OCI-LY7 (cell line): ENCODE measurements at regions of chr6 and their contacts with region 1.

Region 1: DNA sequence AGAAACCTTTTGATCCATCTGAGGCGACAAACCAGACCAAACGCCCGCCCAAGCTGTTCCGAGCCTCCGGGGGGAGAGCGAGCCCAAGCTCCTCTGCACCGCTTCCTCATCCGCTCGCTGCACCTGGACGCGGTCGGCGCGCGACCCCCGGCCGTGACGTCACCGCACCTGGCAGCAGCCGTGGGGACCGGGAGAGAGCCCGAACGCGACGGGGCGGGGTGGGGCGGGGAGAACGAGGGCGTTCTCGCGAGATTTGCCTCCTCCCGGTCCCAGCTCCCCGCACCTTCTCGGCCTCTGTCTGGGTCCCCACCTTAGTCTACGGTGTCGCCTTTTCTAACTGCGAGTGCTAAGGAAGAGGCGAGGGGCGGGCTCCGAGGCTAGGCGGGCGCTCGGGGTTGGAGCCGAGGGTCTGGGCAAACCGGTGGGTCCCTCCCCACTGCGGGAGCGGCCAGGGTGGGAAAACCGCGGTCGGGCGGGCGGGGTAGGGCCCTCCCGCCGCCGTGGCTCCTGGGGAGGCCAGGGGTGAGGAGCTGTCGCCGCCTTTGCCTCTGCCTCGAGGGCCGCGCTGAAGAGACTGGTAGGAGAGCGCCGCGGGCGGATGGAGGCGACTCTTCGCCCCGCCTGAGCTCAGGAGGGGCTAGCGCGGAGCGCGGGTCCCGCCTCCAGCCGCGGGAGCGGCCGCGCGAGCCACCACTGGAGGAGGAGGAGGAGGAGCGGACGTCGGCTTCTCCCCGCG is at the start of gene CD2AP:
- DNase-seq: peak; percentile 98
- H3K4me3 ChIP-seq: peak within 1 kb of the TSS; percentile 81
- H3K27ac ChIP-seq: peak within 1 kb of the TSS; percentile 97
- H3K4me1 ChIP-seq: peaks cover 54% of the 10 kb centered on the region
- CTCF ChIP-seq: 0 out of 2 replicates have a peak, but pooled peaks have one; percentile 30
- total RNA-seq, gene CD2AP: 26.6 and 30.0 TPM in 2 replicates

Region 2: DNA sequence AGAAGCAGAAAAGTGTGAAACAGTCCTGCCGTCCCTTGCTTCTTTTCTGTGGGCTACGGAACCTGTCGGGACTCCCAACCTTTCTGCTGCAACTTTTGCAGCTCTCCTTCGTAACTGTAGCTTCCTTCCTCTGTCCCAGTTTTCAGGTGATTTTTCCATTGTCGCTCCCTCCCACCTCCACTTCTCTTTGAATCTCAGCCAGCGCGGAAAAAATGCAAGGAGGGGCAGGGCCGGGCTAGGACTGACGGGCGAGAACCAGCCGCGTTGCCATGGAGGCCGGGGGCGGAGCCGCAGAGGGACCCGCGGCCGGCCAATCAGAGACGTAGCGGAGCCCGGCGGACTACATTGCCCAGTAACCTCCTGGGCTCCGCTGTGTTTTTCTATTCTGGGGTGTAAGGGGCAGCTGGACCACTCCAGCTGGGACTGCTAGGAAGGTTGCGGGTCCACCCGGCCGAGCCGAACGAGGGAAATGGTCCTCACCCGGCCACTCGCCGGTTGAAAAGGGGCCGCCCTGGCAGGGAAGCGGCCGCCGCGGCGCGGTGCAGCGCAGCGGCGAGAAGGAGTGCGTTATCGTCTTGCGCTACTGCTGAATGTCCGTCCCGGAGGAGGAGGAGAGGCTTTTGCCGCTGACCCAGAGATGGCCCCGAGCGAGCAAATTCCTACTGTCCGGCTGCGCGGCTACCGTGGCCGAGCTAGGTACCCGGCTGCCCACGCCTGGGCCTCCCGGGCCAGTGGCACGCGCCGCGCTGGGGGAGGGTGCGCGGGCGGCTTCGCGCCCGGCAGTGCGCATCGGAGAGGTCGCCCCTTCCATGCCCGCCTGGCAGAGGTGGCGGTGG is 824.8 kb before region 1 on chr6 and contains the starts of genes CYP39A1 and SLC25A27:
- CTCF ChIA-PET with region 1: no interaction called
- POLR2A ChIA-PET with region 1: no interaction called
- intact Hi-C with region 1: loop called (anchors 5 kb)
- DNase-seq: peak; percentile 90
- H3K4me3 ChIP-seq: peak within 1 kb of the TSS; percentile 85
- H3K27ac ChIP-seq: peak within 1 kb of the TSS; percentile 96
- H3K4me1 ChIP-seq: peaks cover 10% of the 10 kb centered on the region
- CTCF ChIP-seq: no peak
- total RNA-seq, gene CYP39A1: 13.4 and 15.4 TPM in 2 replicates
- total RNA-seq, gene SLC25A27: 155 and 175 TPM in 2 replicates

Region 3: GRCh38 chr6:47309291-47310130 is 168.2 kb before region 1 on chr6 and contains the start of gene TNFRSF21:
- CTCF ChIA-PET with region 1: no interaction called
- POLR2A ChIA-PET with region 1: no interaction called
- intact Hi-C with region 1: loop called (anchors 5 kb)
- DNase-seq: peak; percentile 93
- H3K4me3 ChIP-seq: peak within 1 kb of the TSS; percentile 95
- H3K27ac ChIP-seq: peak within 1 kb of the TSS; percentile 62
- H3K4me1 ChIP-seq: peaks cover 46% of the 10 kb centered on the region
- CTCF ChIP-seq: peak; percentile 86
- total RNA-seq, gene TNFRSF21: 22.7 and 28.1 TPM in 2 replicates

Region 4: DNA sequence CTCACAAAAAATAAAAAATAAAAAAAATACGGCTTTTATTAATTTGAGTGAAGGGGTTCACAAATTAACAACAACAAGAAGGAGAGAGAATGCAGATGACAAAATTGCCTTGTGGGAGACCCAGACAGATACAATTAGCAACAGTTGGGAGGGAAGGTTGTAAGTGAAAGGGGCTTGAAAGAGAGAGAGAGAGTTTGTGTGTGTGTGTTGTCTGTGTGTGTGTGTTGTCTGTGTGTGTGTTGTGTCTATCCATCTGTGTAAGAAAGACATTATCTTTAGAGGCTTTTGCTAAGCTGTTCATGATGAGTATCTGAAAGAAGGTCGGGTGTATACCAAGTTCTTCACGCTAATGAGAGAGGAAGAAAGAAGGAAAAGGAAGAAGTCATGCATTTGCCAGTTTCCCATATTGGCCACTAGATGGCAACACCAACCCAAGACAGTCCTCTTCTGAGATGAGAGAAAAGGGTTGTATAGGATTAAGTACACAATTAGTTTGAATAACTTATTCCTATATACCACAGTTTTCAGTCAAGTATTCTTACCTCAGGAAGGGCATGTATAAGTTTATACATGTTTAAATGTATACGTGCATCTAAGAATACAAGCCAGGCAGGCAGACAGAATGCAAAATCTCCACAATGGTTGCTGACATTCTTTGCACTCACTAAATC is 63.8 kb before region 1 on chr6:
- CTCF ChIA-PET with region 1: no interaction called
- POLR2A ChIA-PET with region 1: interaction called, 34 read pairs
- intact Hi-C with region 1: loop called (anchors 1 kb)
- DNase-seq: peak; percentile 82
- H3K4me3 ChIP-seq: peak overlapping the region; percentile 64
- H3K27ac ChIP-seq: peak overlapping the region; percentile 52
- H3K4me1 ChIP-seq: peaks cover 23% of the 10 kb centered on the region
- CTCF ChIP-seq: peak; percentile 99

Region 5: GRCh38 chr6:47440719-47441118 is 36.9 kb before region 1 on chr6:
- CTCF ChIA-PET with region 1: interaction called, 4 read pairs
- POLR2A ChIA-PET with region 1: interaction called, 13 read pairs
- intact Hi-C with region 1: loop called (anchors 1 kb)
- DNase-seq: peak; percentile 72
- H3K4me3 ChIP-seq: peak overlapping the region; percentile 34
- H3K27ac ChIP-seq: peak overlapping the region; percentile 33
- H3K4me1 ChIP-seq: peaks cover 55% of the 10 kb centered on the region
- CTCF ChIP-seq: no peak

Region 6: GRCh38 chr6:47464052-47464451 is 13.6 kb before region 1 on chr6:
- CTCF ChIA-PET with region 1: interaction called, 3 read pairs
- POLR2A ChIA-PET with region 1: interaction called, 34 read pairs
- intact Hi-C with region 1: no loop called
- DNase-seq: no peak
- H3K4me3 ChIP-seq: no peak overlapping the region
- H3K27ac ChIP-seq: no peak overlapping the region
- H3K4me1 ChIP-seq: peaks cover 38% of the 10 kb centered on the region
- CTCF ChIP-seq: no peak